ENCODE measurements at regions of chr5 and their contacts with region 1.

Region 1: GRCh38 chr5:151612689-151613427 is 21.7 kb upstream of the FAT2 start:
- DNase-seq: peak; percentile 18

Region 2: DNA sequence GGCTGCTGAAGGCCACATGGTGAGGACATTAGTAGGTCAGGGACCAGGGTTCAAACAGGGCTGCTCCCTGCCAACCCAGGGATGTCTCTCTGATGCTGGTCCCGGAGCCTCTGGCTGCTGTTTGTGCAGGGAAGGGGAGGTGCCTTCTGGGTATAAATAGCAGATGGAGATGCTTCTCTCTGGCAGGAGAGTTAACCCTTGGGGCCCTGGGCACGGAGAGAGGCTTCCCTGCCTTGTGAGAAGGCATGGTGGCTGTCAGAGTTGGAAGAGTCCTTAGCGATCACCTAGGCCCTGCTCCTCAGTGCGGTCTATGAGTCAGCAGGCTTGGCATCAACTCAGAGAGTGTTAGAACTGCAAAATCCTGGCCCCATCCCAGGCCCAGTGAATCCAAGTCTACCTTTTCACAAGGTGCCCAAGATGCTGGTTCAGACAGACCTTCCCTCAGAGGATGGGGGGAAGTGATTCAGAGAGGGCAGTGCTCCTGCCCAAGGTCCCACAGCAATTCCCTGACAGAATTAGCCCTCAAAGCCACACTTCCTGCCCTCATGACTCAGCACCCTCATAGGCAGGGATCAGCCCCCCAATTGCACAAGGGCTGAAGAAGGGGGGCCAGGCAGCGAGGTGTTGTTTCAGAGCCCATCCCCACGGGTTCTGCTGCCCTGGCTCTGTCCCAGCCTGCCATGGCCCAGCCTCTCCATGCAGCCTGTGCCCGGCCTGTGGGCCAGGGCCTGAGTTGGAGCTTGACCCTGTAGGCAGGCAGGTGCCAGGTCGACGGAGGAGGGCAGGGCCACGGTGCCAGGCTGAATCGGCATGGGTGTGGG is 1348.8 kb before region 1 on chr5:
- intact Hi-C with region 1: no loop called
- DNase-seq: no peak

Region 3: GRCh38 chr5:151581812-151582583 is 30.9 kb before region 1 on chr5:
- intact Hi-C with region 1: loop called in 1 of 2 experiments (anchors 1 kb)
- DNase-seq: peak; percentile 58

Region 4: GRCh38 chr5:151684690-151685361 is 72.0 kb after region 1 on chr5:
- intact Hi-C with region 1: no loop called
- DNase-seq: no peak

Measured in posterior vena cava (tissue), 2 donors.